T-cell (primary cell): ENCODE measurements at regions of chr16 and their contacts with region 1.

Region 1: GRCh38 chr16:3876695-3877094 is 3.8 kb downstream of the CREBBP start:
- DNase-seq: no peak
- ATAC-seq: no peak
- H3K4me3 ChIP-seq: no peak overlapping the region
- H3K4me3 Mint-ChIP-seq: peak overlapping the region; percentile 91 to 94 (median 93)
- H3K27ac ChIP-seq: no peak overlapping the region
- H3K27ac Mint-ChIP-seq: no peak overlapping the region
- H3K4me1 ChIP-seq: peaks cover 39 to 73% of the 10 kb centered on the region in 2 experiments
- H3K4me1 Mint-ChIP-seq: peaks cover 76 to 79% (median 77%) of the 10 kb centered on the region in 3 donors
- H3K27me3 ChIP-seq: peaks cover 0 to 3% of the 10 kb centered on the region in 2 experiments
- H3K27me3 Mint-ChIP-seq: no peaks in the 10 kb centered on the region

Region 2: GRCh38 chr16:3780570-3780969 is 96.1 kb before region 1 on chr16:
- CTCF ChIA-PET with region 1: interaction called, 3 read pairs
- POLR2A ChIA-PET with region 1: interaction called in 1 of 2 experiments, 16 read pairs
- DNase-seq: peak in 6 of 35 experiments; percentile 4 to 36 (median 10)
- ATAC-seq: peak; percentile 24 to 75 (median 38)
- H3K4me3 ChIP-seq: no peak overlapping the region
- H3K4me3 Mint-ChIP-seq: no peak overlapping the region
- H3K27ac ChIP-seq: no peak overlapping the region
- H3K27ac Mint-ChIP-seq: no peak overlapping the region
- H3K4me1 ChIP-seq: no peaks in the 10 kb centered on the region
- H3K4me1 Mint-ChIP-seq: peaks cover 16 to 28% (median 23%) of the 10 kb centered on the region in 3 donors
- H3K27me3 ChIP-seq: no peaks in the 10 kb centered on the region
- H3K27me3 Mint-ChIP-seq: no peaks in the 10 kb centered on the region